ENCODE measurements at regions of chr9 and their contacts with region 1.

Region 1: GRCh38 chr9:69168709-69169217 is 5.3 kb upstream of the TJP2 start:
- DNase-seq: peak; percentile 96
- H3K4me3 Mint-ChIP-seq: peak overlapping the region; percentile 41
- H3K27ac Mint-ChIP-seq: peak overlapping the region; percentile 77
- H3K4me1 Mint-ChIP-seq: peaks cover 34% of the 10 kb centered on the region
- H3K27me3 Mint-ChIP-seq: no peaks in the 10 kb centered on the region
- CTCF ChIP-seq: no peak

Region 2: GRCh38 chr9:68802525-68803015 is 366.2 kb before region 1 on chr9:
- CTCF ChIA-PET with region 1: no interaction called
- POLR2A ChIA-PET with region 1: no interaction called
- intact Hi-C with region 1: no loop called
- DNase-seq: no peak
- H3K4me3 Mint-ChIP-seq: no peak overlapping the region
- H3K27ac Mint-ChIP-seq: no peak overlapping the region
- H3K4me1 Mint-ChIP-seq: no peaks in the 10 kb centered on the region
- H3K27me3 Mint-ChIP-seq: peaks cover 31% of the 10 kb centered on the region
- CTCF ChIP-seq: no peak

Region 3: DNA sequence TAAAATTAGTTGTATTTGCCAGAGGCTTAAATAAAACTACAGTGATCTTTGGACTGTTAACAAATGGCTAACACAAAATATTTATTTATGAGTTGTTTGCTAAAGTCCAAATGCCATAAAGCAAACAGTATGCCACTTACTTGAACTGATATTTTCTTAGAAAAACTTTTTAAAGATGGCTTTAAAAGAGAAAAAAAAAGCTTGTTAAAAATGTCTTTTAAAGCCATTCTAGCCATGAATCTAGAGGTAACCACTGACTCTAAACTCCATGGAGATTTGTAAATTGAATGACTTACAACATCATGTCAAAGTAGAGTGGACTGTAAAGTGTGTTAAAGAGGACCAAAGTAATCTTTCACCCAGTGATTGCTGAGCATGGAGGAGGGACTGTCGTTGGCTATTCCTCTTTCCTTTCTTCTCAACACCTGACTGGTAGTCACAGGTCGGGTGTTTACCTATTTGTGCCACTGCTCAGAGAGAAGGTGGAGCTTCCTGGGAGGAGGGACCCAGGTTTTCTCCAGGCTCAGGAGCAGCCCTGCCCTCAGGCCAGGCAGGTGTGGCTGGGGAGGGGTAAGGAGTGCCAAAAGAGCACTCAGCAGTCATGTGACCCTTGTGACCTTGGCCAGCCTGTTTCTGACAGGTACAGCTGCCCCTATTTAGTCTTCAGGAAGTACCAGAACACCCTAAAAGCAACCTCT is 63.8 kb before region 1 on chr9:
- CTCF ChIA-PET with region 1: interaction called, 3 read pairs
- POLR2A ChIA-PET with region 1: interaction called, 31 read pairs
- intact Hi-C with region 1: no loop called
- DNase-seq: peak; percentile 73
- H3K4me3 Mint-ChIP-seq: no peak overlapping the region
- H3K27ac Mint-ChIP-seq: peak overlapping the region; percentile 61
- H3K4me1 Mint-ChIP-seq: no peaks in the 10 kb centered on the region
- H3K27me3 Mint-ChIP-seq: no peaks in the 10 kb centered on the region
- CTCF ChIP-seq: no peak

Region 4: DNA sequence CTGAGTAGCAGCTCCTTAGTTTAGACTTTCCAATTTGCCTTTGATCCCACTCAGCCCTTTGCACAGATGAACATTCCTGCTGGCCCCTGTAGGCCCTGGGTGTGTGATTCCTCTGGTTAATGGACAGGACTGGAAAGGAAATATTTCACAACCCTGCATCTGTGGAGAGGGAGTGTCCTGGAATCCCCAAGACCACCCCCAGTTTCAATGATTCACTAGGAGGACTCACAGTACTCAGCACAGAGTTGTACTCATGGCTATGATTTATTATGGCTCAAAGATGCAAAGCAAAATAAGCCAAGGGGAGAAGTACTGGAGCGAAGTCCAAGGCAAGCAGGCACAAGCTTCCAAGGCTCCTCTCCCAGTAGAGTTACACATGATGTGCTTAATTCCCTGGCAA is 37.1 kb before region 1 on chr9:
- CTCF ChIA-PET with region 1: interaction called, 4 read pairs
- POLR2A ChIA-PET with region 1: interaction called, 86 read pairs
- intact Hi-C with region 1: no loop called
- DNase-seq: peak; percentile 93
- H3K4me3 Mint-ChIP-seq: peak overlapping the region; percentile 0
- H3K27ac Mint-ChIP-seq: peak overlapping the region; percentile 77
- H3K4me1 Mint-ChIP-seq: peaks cover 33% of the 10 kb centered on the region
- H3K27me3 Mint-ChIP-seq: no peaks in the 10 kb centered on the region
- CTCF ChIP-seq: no peak

Region 5: DNA sequence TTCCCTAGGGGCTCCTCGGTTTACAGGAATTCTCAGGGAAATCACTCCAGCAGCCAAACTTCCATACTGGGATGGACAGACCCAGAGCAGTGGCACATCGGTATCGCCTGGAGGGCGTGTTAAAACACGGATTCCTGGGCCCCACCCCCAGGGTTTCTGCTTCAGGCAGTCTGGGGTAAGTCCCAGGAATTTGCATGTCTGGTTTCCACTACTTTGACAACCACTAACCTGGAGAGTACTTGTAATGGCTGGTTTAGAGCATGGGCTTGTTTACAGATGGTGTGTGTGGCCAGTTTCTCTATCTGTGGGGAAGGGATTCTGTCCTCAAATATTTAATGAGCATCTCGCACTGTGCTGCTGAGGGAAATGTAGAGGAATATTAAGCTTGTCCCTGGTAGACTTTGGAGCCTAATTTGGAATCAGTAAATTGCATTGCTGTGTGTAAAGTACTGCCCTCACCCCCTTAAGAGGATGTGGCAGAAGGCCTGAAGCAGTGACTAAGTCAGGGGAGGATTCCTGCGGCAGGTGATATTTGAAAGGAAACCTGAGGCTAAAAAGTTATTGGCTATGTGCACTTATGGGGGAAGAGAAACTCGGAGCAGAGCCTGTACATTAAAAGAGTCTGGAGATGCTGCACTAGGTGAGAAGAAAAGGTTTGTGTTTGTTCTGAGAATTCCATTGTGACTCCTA is 13.3 kb before region 1 on chr9:
- CTCF ChIA-PET with region 1: interaction called, 10 read pairs
- POLR2A ChIA-PET with region 1: interaction called, 25 read pairs
- intact Hi-C with region 1: no loop called
- DNase-seq: no peak
- H3K4me3 Mint-ChIP-seq: no peak overlapping the region
- H3K27ac Mint-ChIP-seq: peak overlapping the region; percentile 73
- H3K4me1 Mint-ChIP-seq: peaks cover 10% of the 10 kb centered on the region
- H3K27me3 Mint-ChIP-seq: no peaks in the 10 kb centered on the region
- CTCF ChIP-seq: no peak

Region 6: GRCh38 chr9:69180670-69181069 is 11.9 kb after region 1 on chr9:
- CTCF ChIA-PET with region 1: interaction called, 19 read pairs
- POLR2A ChIA-PET with region 1: interaction called, 61 read pairs
- intact Hi-C with region 1: no loop called
- DNase-seq: peak; percentile 95
- H3K4me3 Mint-ChIP-seq: peak overlapping the region; percentile 51
- H3K27ac Mint-ChIP-seq: peak overlapping the region; percentile 82
- H3K4me1 Mint-ChIP-seq: peaks cover 42% of the 10 kb centered on the region
- H3K27me3 Mint-ChIP-seq: no peaks in the 10 kb centered on the region
- CTCF ChIP-seq: no peak

Region 7: GRCh38 chr9:69186841-69187611 is 18.3 kb after region 1 on chr9:
- CTCF ChIA-PET with region 1: interaction called, 81 read pairs
- POLR2A ChIA-PET with region 1: interaction called, 61 read pairs
- intact Hi-C with region 1: no loop called
- DNase-seq: peak; percentile 53
- H3K4me3 Mint-ChIP-seq: no peak overlapping the region
- H3K27ac Mint-ChIP-seq: peak overlapping the region; percentile 62
- H3K4me1 Mint-ChIP-seq: peaks cover 25% of the 10 kb centered on the region
- H3K27me3 Mint-ChIP-seq: no peaks in the 10 kb centered on the region
- CTCF ChIP-seq: no peak

Region 8: DNA sequence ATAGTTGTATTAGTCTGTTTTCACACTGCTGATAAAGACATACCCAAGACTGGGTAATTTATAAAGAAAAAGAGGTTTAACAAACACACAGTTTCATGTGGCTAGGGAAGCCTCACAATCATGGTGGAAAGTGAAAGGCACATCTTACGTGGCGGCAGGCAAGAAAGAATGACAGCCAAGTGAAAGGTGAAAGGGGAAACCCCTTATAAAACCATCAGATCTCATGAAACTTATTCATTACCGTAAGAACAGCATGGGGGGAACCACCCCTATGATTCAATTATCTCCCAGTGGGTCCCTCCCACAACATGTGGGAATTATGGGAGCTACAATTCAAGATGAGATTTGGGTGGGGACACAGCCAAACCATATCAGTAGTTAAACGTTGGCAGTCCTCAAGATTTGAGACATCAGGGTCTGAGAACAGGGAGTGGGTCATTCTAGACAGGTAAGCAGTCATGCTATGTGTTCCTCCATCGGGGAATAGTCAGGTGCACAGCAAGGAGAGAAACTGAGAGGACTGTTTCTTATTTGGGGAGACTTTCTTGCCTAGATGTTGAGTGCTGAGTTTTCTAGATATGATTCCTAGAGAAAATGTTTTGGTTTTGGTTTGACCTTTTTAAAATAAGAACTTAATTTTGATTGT is 110.4 kb after region 1 on chr9:
- CTCF ChIA-PET with region 1: no interaction called
- POLR2A ChIA-PET with region 1: no interaction called
- intact Hi-C with region 1: no loop called
- DNase-seq: no peak
- H3K4me3 Mint-ChIP-seq: no peak overlapping the region
- H3K27ac Mint-ChIP-seq: no peak overlapping the region
- H3K4me1 Mint-ChIP-seq: no peaks in the 10 kb centered on the region
- H3K27me3 Mint-ChIP-seq: peaks cover 21% of the 10 kb centered on the region
- CTCF ChIP-seq: no peak

Region 9: DNA sequence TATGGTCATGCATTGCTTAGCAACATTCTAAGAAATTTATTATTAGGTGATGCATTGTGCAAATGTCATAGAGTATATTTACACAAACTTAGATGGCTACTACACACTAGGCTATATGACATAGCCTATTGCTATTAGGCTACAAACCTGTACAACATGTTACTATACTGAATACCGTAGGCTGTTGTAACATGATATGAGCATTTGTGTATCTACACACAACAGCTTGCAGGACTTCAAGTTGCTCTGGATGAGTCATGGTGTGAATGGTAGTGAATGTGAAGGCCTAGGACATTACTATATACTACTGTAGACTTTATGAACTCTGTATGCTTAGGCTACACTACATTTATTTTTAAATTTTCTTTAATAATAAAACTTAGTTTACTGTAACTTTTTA is 767.7 kb after region 1 on chr9:
- CTCF ChIA-PET with region 1: no interaction called
- POLR2A ChIA-PET with region 1: no interaction called
- intact Hi-C with region 1: no loop called
- DNase-seq: peak; percentile 62
- H3K4me3 Mint-ChIP-seq: no peak overlapping the region
- H3K27ac Mint-ChIP-seq: no peak overlapping the region
- H3K4me1 Mint-ChIP-seq: peaks cover 8% of the 10 kb centered on the region
- H3K27me3 Mint-ChIP-seq: no peaks in the 10 kb centered on the region
- CTCF ChIP-seq: no peak

Measured in MCF 10A (cell line).